ENCODE measurements at regions of chr6 and their contacts with region 1.

Region 1: DNA sequence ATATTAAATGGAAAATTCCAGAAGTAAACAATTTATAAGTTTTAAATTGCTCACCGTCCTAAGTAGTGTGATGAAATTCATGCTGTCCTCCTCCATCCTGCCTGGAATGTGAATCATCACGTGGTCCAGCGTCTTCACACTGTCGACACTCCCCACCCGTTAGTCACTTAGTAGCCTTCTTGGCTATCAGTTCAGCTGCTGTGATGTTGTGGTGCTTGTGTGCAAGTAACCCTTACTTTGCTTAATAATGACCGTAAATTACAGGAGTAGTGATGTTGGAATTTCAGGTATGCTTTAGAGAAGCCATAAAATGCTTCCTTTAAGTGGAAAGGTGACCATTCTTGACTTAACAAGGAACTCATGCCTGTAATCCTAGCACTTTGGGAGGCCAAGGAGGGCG is 25.2 kb downstream of the RIOK1 start:
- DNase-seq: peak in 1 of 2 experiments; percentile 37
- H3K4me3 ChIP-seq: no peak overlapping the region
- H3K27ac ChIP-seq: no peak overlapping the region
- H3K4me1 ChIP-seq: no peaks in the 10 kb centered on the region
- H3K27me3 ChIP-seq: no peaks in the 10 kb centered on the region
- CTCF ChIP-seq: no peak

Region 2: GRCh38 chr6:7479801-7480266 is 65.0 kb after region 1 on chr6:
- CTCF ChIA-PET with region 1: no interaction called
- POLR2A ChIA-PET with region 1: interaction called, 19 read pairs
- intact Hi-C with region 1: no loop called
- DNase-seq: peak; percentile 83 to 95
- H3K4me3 ChIP-seq: peak overlapping the region; percentile 37; the same call in 1 of the 2 replicates
- H3K27ac ChIP-seq: peak overlapping the region; percentile 35; the same call in 1 of the 2 replicates
- H3K4me1 ChIP-seq: no peaks in the 10 kb centered on the region
- H3K27me3 ChIP-seq: no peaks in the 10 kb centered on the region
- CTCF ChIP-seq: no peak

Region 3: GRCh38 chr6:7580927-7581618 is 166.3 kb after region 1 on chr6:
- CTCF ChIA-PET with region 1: no interaction called
- POLR2A ChIA-PET with region 1: no interaction called
- intact Hi-C with region 1: no loop called
- DNase-seq: no peak
- H3K4me3 ChIP-seq: no peak overlapping the region
- H3K27ac ChIP-seq: no peak overlapping the region
- H3K4me1 ChIP-seq: no peaks in the 10 kb centered on the region
- H3K27me3 ChIP-seq: no peaks in the 10 kb centered on the region
- CTCF ChIP-seq: no peak